ENCODE measurements at regions of chr2 and their contacts with region 1.

Region 1: GRCh38 chr2:61538200-61538919 is at the start of gene XPO1:
- DNase-seq: peak; percentile 100
- H3K4me3 ChIP-seq: peak within 1 kb of the TSS; percentile 74 to 93 (median 87)
- H3K27ac ChIP-seq: peak within 1 kb of the TSS; percentile 87 to 99 (median 96)
- H3K4me1 ChIP-seq: peaks cover 0 to 34% (median 31%) of the 10 kb centered on the region in 4 donors
- H3K27me3 ChIP-seq: no peaks in the 10 kb centered on the region
- CTCF ChIP-seq: no peak
- EP300 ChIP-seq: peak in 2 of 4 donors; percentile 25 to 65
- POLR2A ChIP-seq: peak; percentile 93 to 96
- total RNA-seq, gene XPO1: 90.6 to 460 (median 113) TPM

Region 2: GRCh38 chr2:61176755-61177726 is 361.3 kb before region 1 on chr2:
- intact Hi-C with region 1: loop called (anchors 5 kb)
- DNase-seq: peak; percentile 96
- H3K4me3 ChIP-seq: peak overlapping the region; percentile 74 to 94 (median 88)
- H3K27ac ChIP-seq: peak overlapping the region; percentile 97 to 99 (median 98)
- H3K4me1 ChIP-seq: peaks cover 0 to 47% (median 46%) of the 10 kb centered on the region in 4 donors
- H3K27me3 ChIP-seq: no peaks in the 10 kb centered on the region
- CTCF ChIP-seq: no peak
- EP300 ChIP-seq: peak in 2 of 4 donors; percentile 45 to 70
- POLR2A ChIP-seq: peak; percentile 64 to 79

Region 3: DNA sequence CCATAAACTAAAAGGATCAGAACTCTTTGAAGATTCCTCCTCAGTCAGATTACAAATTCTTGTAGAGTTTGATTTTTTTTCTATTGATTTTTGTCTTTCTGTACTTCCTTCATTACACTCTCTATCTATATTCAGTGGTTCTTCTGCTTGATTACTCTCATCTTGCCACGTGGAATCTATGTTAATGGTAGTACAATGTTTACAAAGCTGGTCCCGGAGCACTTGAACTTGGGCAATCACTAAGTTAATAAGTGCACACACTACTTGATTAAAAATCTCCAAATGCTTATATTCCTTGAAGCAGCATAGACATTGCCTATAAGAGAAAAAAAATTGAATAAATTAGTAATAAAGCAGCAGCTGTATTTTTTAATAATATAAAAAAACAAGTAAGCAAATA is 132.5 kb before region 1 on chr2:
- intact Hi-C with region 1: no loop called
- DNase-seq: no peak
- H3K4me3 ChIP-seq: no peak overlapping the region
- H3K27ac ChIP-seq: no peak overlapping the region
- H3K4me1 ChIP-seq: no peaks in the 10 kb centered on the region
- H3K27me3 ChIP-seq: no peaks in the 10 kb centered on the region
- CTCF ChIP-seq: no peak
- EP300 ChIP-seq: no peak
- POLR2A ChIP-seq: no peak

Region 4: DNA sequence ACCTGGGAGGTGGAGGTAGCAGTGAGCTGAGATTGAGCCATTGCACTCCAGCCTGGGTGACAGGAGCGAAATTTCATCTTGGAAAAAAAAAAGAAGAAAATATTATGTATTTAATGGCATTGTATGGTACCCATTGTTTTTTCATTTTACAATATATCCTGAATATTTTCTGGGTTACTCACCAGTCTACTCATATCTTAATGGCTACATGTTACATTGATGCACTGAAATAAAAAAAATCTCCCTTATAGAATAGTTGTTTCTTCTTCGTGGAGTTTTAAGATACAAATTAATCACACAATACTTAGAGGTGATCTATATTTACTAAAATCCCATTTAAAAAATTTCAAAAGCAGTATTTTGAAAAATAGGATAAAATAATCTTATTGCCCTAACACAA is 66.1 kb after region 1 on chr2:
- intact Hi-C with region 1: no loop called
- DNase-seq: no peak
- H3K4me3 ChIP-seq: no peak overlapping the region
- H3K27ac ChIP-seq: no peak overlapping the region
- H3K4me1 ChIP-seq: no peaks in the 10 kb centered on the region
- H3K27me3 ChIP-seq: no peaks in the 10 kb centered on the region
- CTCF ChIP-seq: no peak
- EP300 ChIP-seq: no peak
- POLR2A ChIP-seq: no peak

Region 5: DNA sequence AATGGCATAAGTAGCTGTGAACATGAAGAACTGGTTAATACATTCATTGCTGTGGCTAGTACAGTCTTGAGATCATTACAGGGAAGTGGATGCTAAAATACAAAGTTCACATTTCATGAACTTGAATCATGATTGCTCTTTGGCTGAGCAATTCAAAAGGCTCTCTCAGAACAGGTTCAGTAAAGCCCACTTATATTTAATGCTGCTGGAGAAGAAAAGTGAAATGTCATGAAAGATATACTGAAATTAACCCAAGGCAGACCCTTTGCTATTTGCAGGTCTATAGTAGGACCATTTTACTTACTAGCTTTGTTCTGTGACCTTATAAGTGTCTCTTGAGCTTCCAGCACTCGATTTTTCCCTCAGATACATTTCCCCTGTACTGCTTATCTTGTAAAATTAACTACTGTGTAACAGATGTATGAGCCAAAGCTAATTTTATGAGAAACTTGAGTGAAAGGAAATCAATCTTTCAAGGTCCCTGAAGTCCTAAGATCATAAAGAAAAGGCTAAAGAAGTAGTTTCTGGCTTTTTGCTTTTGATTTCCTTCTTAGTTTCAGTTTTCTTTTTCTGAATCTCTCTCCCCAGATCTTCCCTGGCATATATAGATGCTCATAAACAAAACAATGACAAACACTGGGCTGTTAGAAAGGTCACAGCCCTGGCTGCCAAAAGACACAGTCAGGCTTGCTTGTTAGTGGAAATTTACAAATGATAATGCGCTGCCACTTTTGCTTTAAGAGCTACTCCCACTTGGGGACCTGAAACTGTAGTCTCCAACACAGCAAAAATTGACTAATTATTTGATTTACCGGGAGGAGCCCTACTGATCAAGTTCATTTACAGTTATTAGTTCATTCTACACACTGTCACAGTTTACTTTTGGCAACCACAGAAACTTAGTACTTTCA is 132.5 kb after region 1 on chr2:
- intact Hi-C with region 1: loop called (anchors 5 kb)
- DNase-seq: peak; percentile 79
- H3K4me3 ChIP-seq: peak overlapping the region; percentile 4 to 33 (median 22)
- H3K27ac ChIP-seq: peak overlapping the region; percentile 72 to 82 (median 78)
- H3K4me1 ChIP-seq: peaks cover 0 to 21% (median 13%) of the 10 kb centered on the region in 4 donors
- H3K27me3 ChIP-seq: no peaks in the 10 kb centered on the region
- CTCF ChIP-seq: no peak
- EP300 ChIP-seq: no peak
- POLR2A ChIP-seq: no peak

Region 6: GRCh38 chr2:61764035-61764800 is 225.9 kb after region 1 on chr2:
- intact Hi-C with region 1: loop called (anchors 2 kb)
- DNase-seq: peak; percentile 99
- H3K4me3 ChIP-seq: peak overlapping the region; percentile 59 to 77 (median 68)
- H3K27ac ChIP-seq: peak overlapping the region; percentile 93 to 99 (median 97)
- H3K4me1 ChIP-seq: peaks cover 0 to 15% (median 5%) of the 10 kb centered on the region in 4 donors
- H3K27me3 ChIP-seq: no peaks in the 10 kb centered on the region
- CTCF ChIP-seq: no peak
- EP300 ChIP-seq: peak in 2 of 4 donors; percentile 28 to 62
- POLR2A ChIP-seq: peak; percentile 76 to 84